ENCODE measurements at regions of chr17 and their contacts with region 1.

Region 1: GRCh38 chr17:59753522-59754467 is 46.3 kb downstream of the VMP1 start:
- DNase-seq: no peak
- H3K4me3 ChIP-seq: peak overlapping the region in 1 of 8 donors; percentile 19
- H3K27ac ChIP-seq: peak overlapping the region in 7 of 8 donors; percentile 13 to 73 (median 56)
- H3K4me1 ChIP-seq: peaks cover 0 to 57% (median 26%) of the 10 kb centered on the region in 6 donors
- H3K27me3 ChIP-seq: no peaks in the 10 kb centered on the region
- CTCF ChIP-seq: peak; percentile 32 to 80 (median 72)
- POLR2A ChIP-seq: no peak

Region 2: DNA sequence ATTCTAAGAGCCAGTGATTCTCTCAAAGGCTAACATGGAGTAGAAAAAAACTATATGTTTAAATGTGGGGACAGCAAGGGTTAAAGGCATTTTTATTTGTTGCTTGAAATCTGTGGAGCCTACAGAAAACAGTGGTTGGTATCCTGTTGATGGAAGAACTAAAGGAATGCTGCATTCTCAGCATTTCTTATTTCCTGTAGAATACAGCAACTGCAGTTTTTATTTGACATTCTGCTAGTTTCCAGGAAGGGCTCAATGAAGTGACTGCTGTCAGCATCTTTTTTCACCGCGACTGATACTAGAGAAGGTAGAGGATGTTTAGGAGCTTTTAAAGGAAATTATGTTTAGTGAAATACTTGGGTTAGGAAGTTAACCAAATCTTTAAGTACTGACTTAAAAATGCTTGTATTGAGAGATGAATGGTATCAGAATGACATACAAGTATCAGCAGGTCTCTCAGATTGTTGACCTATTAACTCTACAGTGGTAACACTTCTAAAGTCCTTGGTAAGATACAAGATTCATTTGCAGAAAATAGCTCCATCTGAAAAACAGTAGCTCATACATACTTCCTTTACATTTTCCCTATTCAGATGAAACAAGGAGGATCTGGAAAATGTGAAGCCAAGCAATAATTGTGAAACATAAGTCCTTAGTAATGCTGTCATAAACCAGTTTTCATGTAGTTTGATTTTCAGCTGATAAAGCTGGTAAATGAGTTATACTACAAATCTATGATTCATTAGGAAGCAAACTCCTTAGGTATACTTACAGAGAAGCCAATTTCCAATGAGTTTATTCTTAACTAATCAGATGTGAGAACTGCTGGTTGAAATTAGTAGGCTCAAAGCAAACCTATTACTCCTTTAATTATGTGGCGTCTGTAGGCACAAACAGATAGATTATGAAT is 118.9 kb before region 1 on chr17:
- intact Hi-C with region 1: no loop called
- DNase-seq: no peak
- H3K4me3 ChIP-seq: peak overlapping the region in 1 of 8 donors; percentile 3
- H3K27ac ChIP-seq: peak overlapping the region; percentile 42 to 80 (median 73)
- H3K4me1 ChIP-seq: peaks cover 49 to 98% (median 87%) of the 10 kb centered on the region in 6 donors
- H3K27me3 ChIP-seq: no peaks in the 10 kb centered on the region
- CTCF ChIP-seq: no peak
- POLR2A ChIP-seq: no peak

Region 3: GRCh38 chr17:59695945-59696692 is 57.7 kb before region 1 on chr17:
- intact Hi-C with region 1: no loop called
- DNase-seq: no peak
- H3K4me3 ChIP-seq: no peak overlapping the region
- H3K27ac ChIP-seq: peak overlapping the region in 2 of 8 donors; percentile 4 to 31
- H3K4me1 ChIP-seq: peaks cover 0 to 54% (median 6%) of the 10 kb centered on the region in 6 donors
- H3K27me3 ChIP-seq: no peaks in the 10 kb centered on the region
- CTCF ChIP-seq: no peak
- POLR2A ChIP-seq: no peak

Region 4: GRCh38 chr17:59804901-59805465 is 51.2 kb after region 1 on chr17:
- intact Hi-C with region 1: no loop called
- DNase-seq: no peak
- H3K4me3 ChIP-seq: peak overlapping the region in 2 of 8 donors; percentile 1 to 35
- H3K27ac ChIP-seq: peak overlapping the region in 7 of 8 donors; percentile 43 to 82 (median 73)
- H3K4me1 ChIP-seq: peaks cover 0 to 52% (median 9%) of the 10 kb centered on the region in 6 donors
- H3K27me3 ChIP-seq: no peaks in the 10 kb centered on the region
- CTCF ChIP-seq: no peak
- POLR2A ChIP-seq: no peak

Region 5: DNA sequence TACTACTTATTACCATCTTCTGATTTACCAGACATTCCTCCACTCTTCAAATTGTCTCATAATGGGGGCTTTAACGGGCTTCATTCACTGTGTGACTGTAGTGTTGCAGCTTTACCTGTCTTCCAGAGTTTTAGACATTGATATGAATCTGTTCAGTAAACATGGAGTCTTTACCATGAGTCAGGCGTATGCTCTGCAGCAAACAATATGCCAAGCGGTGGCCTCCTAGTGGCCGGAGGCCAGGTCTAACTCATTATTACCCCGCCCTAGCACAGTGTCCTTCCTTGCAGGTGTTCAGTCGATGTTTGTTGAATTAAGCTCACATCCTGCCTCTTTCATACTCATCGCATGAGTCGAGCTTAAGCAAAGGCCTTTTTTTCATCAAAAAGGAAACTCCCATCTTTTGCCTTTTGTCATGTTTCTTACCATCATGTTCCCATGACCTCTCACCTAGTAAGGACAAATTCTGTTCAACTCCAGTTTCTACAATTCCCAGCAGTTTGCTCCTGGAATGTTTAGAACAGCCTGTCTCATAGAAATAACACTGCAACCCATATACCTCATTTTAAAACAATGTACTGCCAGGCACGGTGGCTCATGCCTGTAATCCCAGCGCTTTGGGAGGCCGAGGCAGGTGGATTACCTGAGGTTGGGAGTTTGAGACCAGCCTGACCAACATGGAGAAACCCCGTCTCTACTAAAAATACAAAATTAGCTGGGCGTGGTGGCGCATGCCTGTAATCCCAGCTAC is 99.5 kb after region 1 on chr17:
- intact Hi-C with region 1: loop called (anchors 5 kb)
- DNase-seq: peak; percentile 80
- H3K4me3 ChIP-seq: no peak overlapping the region
- H3K27ac ChIP-seq: peak overlapping the region; percentile 4 to 92 (median 68)
- H3K4me1 ChIP-seq: peaks cover 8 to 78% (median 24%) of the 10 kb centered on the region in 6 donors
- H3K27me3 ChIP-seq: no peaks in the 10 kb centered on the region
- CTCF ChIP-seq: peak in 7 of 11 experiments; percentile 16 to 43 (median 38)
- POLR2A ChIP-seq: no peak

Region 6: DNA sequence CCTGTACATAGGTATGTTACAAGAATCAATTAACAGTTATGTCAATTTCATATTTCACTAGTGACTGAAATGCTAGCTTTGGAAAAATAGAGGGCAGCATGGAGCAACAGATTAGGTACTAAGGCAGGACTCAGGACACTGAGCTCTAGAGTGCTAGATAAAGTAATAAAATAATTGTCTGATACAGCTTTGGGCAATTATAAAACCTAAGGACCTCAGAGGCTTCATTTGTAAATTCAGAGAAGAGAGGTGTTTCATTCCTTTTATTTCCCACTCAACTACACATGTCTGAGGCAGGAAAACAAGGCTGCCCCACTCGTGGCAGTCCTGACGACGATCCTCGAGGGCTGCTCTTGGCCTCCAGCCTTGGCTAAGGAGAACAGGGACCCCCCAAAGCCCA is 477.4 kb after region 1 on chr17:
- intact Hi-C with region 1: no loop called
- DNase-seq: no peak
- H3K4me3 ChIP-seq: no peak overlapping the region
- H3K27ac ChIP-seq: no peak overlapping the region
- H3K4me1 ChIP-seq: no peaks in the 10 kb centered on the region
- H3K27me3 ChIP-seq: no peaks in the 10 kb centered on the region
- CTCF ChIP-seq: peak in 4 of 11 experiments; percentile 5 to 19 (median 14)
- POLR2A ChIP-seq: no peak